Activated CD4-positive, alpha-beta T cell treated with anti-CD3 and anti-CD28 coated beads for 36 hours (primary cell): ENCODE measurements at regions of chr22 and their contacts with region 1.

Region 1: DNA sequence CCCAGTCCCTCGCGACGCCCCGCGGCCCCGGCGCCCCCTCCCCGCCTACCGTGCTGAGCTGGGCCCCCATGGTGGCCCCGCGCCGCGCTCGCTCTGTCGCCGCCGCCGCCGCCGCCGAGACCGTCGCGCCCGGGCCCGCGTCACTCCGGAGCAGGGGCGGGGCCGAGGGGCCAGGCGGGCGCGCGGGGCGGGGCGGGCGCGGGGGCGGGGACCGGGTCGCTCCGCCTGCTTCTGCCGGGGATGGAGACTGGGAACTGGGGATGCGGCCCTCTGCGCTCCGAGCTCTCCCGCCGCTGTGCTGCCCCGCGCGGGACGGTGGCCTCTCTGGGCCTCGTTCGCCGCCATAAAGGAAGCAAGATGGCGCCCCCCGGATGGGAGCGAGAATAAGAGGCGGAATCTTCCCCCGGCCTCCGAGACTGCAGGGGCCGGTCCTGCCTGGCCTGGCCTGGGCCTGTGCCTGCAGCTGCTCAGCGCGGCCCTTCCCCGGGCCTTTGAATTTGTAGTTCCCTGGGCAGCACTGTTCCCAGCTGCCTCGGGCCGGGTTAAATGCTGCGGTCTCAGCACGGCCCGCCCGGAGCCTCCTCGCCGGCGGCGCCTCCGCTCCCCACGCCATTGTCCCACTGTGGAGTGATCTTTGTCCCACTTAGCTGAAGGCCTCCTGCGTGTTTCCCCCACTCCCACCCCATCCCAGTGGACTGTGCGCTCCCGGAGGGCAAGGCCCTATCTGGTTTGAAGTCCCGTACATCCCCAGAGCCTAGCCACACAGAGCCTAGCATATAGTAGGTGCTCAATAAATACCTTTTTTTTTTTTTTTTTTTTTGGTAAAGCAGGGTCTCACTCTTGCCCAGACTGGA is at the start of gene CYB5R3:
- DNase-seq: peak; percentile 91
- ATAC-seq: peak; percentile 87
- H3K4me3 Mint-ChIP-seq: peak within 1 kb of the TSS; percentile 92
- H3K27ac Mint-ChIP-seq: peak within 1 kb of the TSS; percentile 92
- H3K4me1 Mint-ChIP-seq: peaks cover 22% of the 10 kb centered on the region
- H3K27me3 Mint-ChIP-seq: no peaks in the 10 kb centered on the region
- total RNA-seq, gene CYB5R3: 79.5 to 101 TPM

Region 2: DNA sequence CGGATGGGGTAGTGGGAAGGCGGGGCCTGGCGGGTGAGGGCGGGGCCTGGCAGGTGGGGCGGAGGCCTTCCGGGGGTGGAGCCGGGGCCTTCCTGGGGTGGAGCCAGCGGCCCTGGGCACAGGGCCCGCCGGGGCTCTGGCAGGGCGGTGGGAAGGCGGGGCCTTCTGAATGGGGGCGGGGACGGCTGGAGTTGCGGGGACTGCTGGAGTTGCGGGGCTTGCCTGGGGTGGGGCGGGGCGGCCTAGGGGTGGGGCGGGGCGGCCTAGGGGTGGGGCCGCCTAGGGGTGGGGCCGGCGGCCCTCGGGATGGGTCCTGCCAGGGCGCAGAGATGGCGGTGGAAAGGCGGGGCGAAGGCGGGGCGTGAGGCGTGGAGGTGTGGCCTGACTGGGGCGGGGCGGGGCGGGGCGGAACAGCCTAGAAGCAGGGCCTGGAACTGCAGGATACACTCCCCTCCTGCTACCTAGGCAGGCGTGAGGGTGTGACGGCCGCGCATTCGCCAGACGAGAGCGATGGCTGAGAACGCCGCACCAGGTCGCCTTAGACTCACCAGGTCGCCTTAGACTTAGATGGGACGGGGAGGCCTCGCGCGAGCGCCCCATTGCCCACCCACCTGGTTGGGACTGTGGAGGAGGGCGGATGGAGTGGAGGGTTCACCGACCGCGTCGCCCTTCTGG is 149.2 kb before region 1 on chr22:
- CTCF ChIA-PET with region 1: no interaction called
- POLR2A ChIA-PET with region 1: no interaction called
- intact Hi-C with region 1: loop called in 1 of 2 experiments (anchors 2 kb)
- DNase-seq: peak; percentile 91
- ATAC-seq: peak; percentile 98
- H3K4me3 Mint-ChIP-seq: peak overlapping the region; percentile 38
- H3K27ac Mint-ChIP-seq: no peak overlapping the region
- H3K4me1 Mint-ChIP-seq: peaks cover 11% of the 10 kb centered on the region
- H3K27me3 Mint-ChIP-seq: no peaks in the 10 kb centered on the region

Region 3: DNA sequence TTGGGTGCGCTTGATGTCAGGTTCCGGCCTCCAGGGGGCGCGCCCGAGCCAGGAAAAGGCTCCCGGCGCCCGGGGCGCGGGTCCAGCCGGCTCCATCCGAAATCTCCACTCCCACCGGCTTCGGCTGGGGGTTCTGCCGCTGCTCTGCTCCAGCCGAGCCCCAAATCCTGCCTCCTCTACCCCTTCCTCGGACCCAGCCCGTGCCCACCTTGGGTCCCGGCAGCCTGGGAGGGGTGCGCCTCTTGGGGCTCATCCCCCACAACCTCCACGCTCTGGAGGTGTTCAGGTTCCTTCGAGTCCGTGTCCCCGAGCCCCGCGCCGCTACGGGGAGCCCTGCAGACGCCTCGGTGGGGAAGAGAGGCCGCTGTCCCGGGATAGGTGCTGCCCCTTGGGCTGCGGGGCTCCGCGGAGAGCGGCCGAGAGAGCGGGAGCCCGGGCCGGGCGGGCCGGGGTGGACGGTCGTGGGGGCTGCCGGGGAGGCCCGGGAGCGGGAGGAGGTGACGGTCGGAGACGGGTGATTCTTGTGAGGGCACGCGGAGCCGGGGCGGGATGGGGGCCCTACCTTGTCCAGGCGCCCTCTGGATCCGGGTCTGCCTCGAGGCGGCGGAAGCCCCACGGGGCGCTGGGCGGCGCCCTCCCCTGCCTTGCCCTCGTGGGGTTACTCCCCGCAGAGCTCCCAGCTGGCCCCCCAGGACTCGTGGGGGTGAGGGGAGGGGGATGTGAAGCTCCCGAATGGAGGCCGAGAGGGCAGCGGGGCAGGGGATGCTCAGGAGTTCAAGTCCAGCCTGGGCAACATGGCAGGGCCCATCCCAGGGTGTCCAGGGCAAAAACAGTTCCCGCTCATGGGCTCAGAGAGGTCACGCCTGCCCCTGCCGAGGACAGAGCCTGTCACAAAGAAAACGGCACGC is 12.9 kb after region 1 on chr22:
- CTCF ChIA-PET with region 1: interaction called, 6 read pairs
- POLR2A ChIA-PET with region 1: interaction called, 3 read pairs
- intact Hi-C with region 1: loop called in 1 of 2 experiments (anchors 1 kb)
- DNase-seq: peak; percentile 90
- ATAC-seq: peak; percentile 89
- H3K4me3 Mint-ChIP-seq: peak overlapping the region; percentile 49
- H3K27ac Mint-ChIP-seq: no peak overlapping the region
- H3K4me1 Mint-ChIP-seq: no peaks in the 10 kb centered on the region
- H3K27me3 Mint-ChIP-seq: peaks cover 2% of the 10 kb centered on the region

Region 4: GRCh38 chr22:42680648-42681047 is 31.2 kb after region 1 on chr22:
- CTCF ChIA-PET with region 1: no interaction called
- POLR2A ChIA-PET with region 1: no interaction called
- intact Hi-C with region 1: no loop called
- DNase-seq: peak; percentile 14
- ATAC-seq: peak; percentile 60
- H3K4me3 Mint-ChIP-seq: no peak overlapping the region
- H3K27ac Mint-ChIP-seq: no peak overlapping the region
- H3K4me1 Mint-ChIP-seq: no peaks in the 10 kb centered on the region
- H3K27me3 Mint-ChIP-seq: peaks cover 2% of the 10 kb centered on the region

Region 5: GRCh38 chr22:42863349-42863961 is 214.0 kb after region 1 on chr22:
- CTCF ChIA-PET with region 1: no interaction called
- POLR2A ChIA-PET with region 1: no interaction called
- intact Hi-C with region 1: loop called in 1 of 2 experiments (anchors 1 kb)
- DNase-seq: peak; percentile 76
- ATAC-seq: peak; percentile 78
- H3K4me3 Mint-ChIP-seq: no peak overlapping the region
- H3K27ac Mint-ChIP-seq: peak overlapping the region; percentile 75
- H3K4me1 Mint-ChIP-seq: peaks cover 19% of the 10 kb centered on the region
- H3K27me3 Mint-ChIP-seq: peaks cover 6% of the 10 kb centered on the region

Region 6: DNA sequence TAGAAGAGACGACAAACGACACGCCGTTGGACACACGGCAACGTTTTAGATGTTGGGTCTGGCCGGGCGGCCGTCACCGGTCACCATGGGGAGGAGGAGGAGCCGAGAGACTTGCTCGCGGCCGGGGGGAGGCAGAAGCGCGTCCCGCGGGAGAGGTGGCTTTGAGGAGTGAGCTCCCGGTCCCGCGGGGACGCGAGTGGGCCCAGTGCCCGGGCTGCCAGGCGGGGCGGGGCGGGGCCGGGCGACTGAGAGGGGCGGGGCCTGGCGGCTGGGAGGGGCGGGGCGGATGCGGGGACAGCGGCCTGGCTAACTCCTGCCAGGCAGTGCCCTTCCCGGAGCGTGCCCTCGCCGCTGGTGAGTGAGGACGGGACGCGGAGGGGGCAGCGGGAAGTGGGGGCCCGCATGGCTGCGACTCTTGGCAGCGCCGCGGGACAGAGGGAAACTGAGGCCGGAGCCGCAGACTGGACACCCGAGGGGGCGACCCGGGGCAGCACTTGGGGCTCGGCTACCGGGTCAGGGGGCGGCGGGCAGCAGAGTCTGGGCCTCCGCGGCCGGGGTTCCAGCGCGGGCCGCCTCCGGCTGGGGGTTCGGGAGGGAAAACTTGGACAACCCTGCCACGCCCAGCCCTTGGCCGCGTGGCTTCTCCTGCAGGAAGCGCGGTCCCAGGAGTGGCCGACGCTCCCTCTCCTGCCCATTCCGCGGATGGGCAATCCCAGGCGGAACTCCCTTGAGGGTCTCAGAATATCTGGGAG is 502.0 kb after region 1 on chr22 and contains the start of gene TSPO:
- CTCF ChIA-PET with region 1: no interaction called
- POLR2A ChIA-PET with region 1: no interaction called
- intact Hi-C with region 1: loop called in 1 of 2 experiments (anchors 1 kb)
- DNase-seq: peak; percentile 81
- ATAC-seq: peak; percentile 58
- H3K4me3 Mint-ChIP-seq: peak within 1 kb of the TSS; percentile 88
- H3K27ac Mint-ChIP-seq: peak within 1 kb of the TSS; percentile 90
- H3K4me1 Mint-ChIP-seq: peaks cover 35% of the 10 kb centered on the region
- H3K27me3 Mint-ChIP-seq: no peaks in the 10 kb centered on the region
- total RNA-seq, gene TSPO: 61.7 to 114 TPM